ENCODE measurements at regions of chr2 and their contacts with region 1.

Region 1: DNA sequence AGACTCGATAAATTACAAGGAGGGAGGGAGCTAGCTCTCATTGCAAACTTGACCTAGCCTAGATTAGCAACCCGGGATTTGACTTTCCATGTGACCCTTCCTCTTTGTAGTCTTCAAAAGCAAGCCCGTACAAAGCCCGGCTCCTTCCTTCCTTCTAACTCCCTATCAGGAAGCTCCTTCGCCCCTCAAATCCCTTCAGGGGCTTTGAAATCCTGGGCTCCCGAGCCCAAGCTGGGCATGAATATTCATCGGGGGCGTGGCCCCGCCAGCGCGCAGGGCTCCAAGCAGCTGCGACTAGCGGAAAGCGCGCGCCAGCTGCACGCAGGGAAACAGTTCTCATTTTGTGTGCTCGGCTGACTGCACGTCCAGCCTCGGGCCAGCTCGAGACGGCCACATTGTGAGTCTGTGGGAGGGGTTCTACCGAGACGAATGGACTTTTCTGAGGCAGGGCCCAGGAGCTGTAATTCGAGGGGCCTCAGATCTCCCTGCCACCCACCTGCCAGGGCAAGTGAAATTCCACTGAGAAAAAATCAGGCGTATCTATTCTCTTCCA is 84.0 kb upstream of the PELI1 start:
- DNase-seq: peak; percentile 55 to 58
- H3K4me3 ChIP-seq: peak overlapping the region; percentile 50; the same call in 1 of the 2 replicates
- H3K27ac ChIP-seq: no peak overlapping the region
- H3K4me1 ChIP-seq: no peaks in the 10 kb centered on the region
- H3K27me3 ChIP-seq: no peaks in the 10 kb centered on the region
- CTCF ChIP-seq: no peak

Region 2: DNA sequence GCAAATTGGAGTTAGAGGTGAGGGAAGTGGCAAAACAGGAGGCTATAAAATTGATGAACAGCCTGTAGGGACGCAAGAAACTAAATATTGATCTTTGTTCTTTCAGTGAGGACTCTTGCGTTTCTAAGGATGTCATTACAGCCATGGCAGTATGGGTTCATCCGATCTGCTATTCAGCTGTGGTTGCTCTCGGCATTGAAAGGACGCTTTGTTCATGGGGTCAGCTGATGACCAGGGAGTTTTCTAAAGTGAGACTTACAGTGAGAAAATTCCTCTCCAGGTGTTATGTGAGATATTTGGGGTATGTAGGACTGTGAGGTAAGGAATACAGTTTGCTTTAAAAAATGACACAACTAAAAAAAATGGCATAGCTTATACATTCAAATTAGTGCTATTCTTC is 31.2 kb before region 1 on chr2:
- CTCF ChIA-PET with region 1: interaction called, 11 read pairs
- POLR2A ChIA-PET with region 1: no interaction called
- intact Hi-C with region 1: no loop called
- DNase-seq: no peak
- H3K4me3 ChIP-seq: no peak overlapping the region
- H3K27ac ChIP-seq: no peak overlapping the region
- H3K4me1 ChIP-seq: peaks cover 6% of the 10 kb centered on the region
- H3K27me3 ChIP-seq: no peaks in the 10 kb centered on the region
- CTCF ChIP-seq: no peak

Region 3: DNA sequence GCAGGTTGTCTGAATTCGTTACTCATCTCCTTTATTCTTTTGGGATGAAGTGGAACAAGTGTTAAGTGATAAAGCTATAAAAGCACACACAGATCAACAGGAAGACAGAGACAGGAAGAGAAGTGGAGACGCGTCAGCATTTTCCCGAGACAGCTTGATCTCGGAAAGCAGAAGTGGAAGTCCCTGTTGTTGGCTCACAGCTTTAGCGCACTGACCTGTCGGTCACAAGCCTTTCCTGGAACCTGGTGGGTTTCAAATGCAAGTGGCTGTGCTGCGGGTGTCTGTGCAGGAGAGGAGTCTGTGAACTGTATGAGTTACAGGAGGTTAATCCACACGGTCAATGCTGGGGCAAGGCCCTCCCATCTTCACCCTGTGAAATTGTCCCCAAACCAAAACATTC is 32.6 kb after region 1 on chr2:
- CTCF ChIA-PET with region 1: interaction called, 7 read pairs
- POLR2A ChIA-PET with region 1: no interaction called
- intact Hi-C with region 1: loop called (anchors 5 kb)
- DNase-seq: peak in 1 of 2 experiments; percentile 25
- H3K4me3 ChIP-seq: no peak overlapping the region
- H3K27ac ChIP-seq: no peak overlapping the region
- H3K4me1 ChIP-seq: peaks cover 24% of the 10 kb centered on the region
- H3K27me3 ChIP-seq: no peaks in the 10 kb centered on the region
- CTCF ChIP-seq: no peak

Region 4: GRCh38 chr2:64311948-64312621 is 83.9 kb after region 1 on chr2:
- CTCF ChIA-PET with region 1: no interaction called
- POLR2A ChIA-PET with region 1: no interaction called
- intact Hi-C with region 1: loop called (anchors 10 kb)
- DNase-seq: peak; percentile 70 to 73
- H3K4me3 ChIP-seq: no peak overlapping the region
- H3K27ac ChIP-seq: no peak overlapping the region
- H3K4me1 ChIP-seq: no peaks in the 10 kb centered on the region
- H3K27me3 ChIP-seq: no peaks in the 10 kb centered on the region
- CTCF ChIP-seq: no peak

Measured in PC-9 (cell line).